GM10248 (cell line): ENCODE measurements at regions of chr12 and their contacts with region 1.

Region 1: DNA sequence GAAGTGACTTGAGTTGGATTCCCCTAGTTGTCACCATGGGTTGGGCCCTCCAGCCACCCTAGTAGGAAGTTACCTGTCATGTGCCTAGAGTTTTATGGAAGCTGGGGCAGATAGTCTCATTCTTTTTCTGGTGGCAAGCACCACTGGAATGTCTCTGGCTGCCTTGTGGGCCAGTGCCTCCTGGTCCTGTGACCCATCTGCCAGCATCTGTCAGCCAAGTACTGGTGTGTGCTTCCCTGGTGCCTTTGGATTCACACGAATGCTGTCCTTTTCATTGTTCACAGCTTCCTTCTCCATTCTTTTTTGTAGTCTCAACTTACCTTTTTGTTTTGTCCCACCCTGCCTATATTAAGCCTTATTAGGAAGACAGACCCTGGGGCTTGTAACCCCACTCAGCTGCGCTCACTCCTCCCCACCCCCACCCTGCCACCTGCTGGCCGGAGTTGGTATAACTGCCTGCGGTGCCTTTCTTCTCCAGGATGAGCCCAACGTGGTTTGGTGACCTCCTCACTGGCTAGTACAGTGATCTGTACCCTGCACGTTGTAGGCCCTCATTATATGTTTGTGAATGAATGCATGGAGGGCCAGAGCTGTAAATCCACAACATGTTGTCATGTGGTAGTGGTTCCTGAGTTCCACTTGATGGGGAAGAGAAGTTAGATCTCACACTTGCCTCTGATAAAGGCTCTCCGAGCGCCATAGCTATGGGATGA is 125.7 kb downstream of the TSPAN9 start:
- DNase-seq: peak; percentile 75
- CTCF ChIP-seq: peak; percentile 81

Region 2: DNA sequence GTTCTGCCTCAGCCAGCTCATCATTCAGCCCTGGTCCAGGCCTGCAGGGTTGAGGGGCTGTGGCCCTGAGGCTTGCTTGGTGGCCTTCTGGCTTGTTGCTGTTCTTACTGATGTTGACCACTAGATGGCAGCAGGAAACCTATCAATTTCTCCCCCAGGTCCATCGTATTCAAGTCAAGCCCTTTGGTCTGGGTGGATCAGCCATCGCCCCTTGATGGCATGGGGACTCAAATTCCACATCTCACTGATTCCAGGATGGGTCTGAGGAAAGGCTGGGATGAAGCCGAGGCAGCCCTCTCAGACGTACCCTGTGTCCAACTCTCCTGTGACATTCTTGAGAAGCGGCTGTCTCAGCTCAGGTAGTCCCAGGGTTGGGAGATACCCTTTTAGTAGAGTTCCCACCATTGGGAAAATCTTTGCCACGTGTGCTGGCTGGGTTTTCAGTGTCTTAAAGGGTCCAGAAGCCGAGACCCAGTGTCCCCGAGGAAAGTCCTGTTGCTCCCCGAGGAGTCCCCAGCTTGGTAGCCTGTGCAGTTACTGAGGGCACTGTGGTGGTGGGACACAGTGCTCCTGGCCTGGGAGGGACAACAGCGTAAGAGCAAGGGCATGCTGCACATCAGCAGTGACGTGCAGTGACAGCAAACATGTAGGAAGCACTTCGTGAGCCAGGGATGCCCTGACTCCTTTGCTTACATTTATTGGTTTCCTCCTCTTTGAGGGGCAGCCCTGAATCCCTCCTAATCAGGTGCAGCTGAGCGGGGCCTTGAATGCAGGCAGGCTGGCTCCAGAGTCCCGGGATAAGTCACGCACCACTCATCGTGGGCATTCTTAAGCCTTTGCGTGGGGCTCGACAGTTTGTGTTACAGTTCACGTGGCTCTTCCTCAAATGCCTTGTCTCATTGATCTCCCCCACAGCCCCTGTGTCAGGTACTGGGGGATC is 67.1 kb before region 1 on chr12:
- CTCF ChIA-PET with region 1: interaction called, 23 read pairs
- POLR2A ChIA-PET with region 1: no interaction called
- DNase-seq: peak; percentile 86
- CTCF ChIP-seq: peak; percentile 84

Region 3: GRCh38 chr12:3186546-3187215 is 16.2 kb before region 1 on chr12:
- CTCF ChIA-PET with region 1: interaction called, 27 read pairs
- POLR2A ChIA-PET with region 1: no interaction called
- DNase-seq: peak; percentile 66
- CTCF ChIP-seq: no peak

Region 4: GRCh38 chr12:3213188-3213587 is 10.3 kb after region 1 on chr12:
- CTCF ChIA-PET with region 1: interaction called, 13 read pairs
- POLR2A ChIA-PET with region 1: no interaction called
- DNase-seq: no peak
- CTCF ChIP-seq: no peak

Region 5: GRCh38 chr12:3218228-3219171 is 15.6 kb after region 1 on chr12:
- CTCF ChIA-PET with region 1: interaction called, 13 read pairs
- POLR2A ChIA-PET with region 1: no interaction called
- DNase-seq: peak; percentile 54
- CTCF ChIP-seq: no peak

Region 6: GRCh38 chr12:3275171-3276041 is 72.5 kb after region 1 on chr12:
- CTCF ChIA-PET with region 1: interaction called, 10 read pairs
- POLR2A ChIA-PET with region 1: no interaction called
- DNase-seq: peak; percentile 87
- CTCF ChIP-seq: peak; percentile 89

Region 7: GRCh38 chr12:3480764-3481163 is 277.9 kb after region 1 on chr12:
- CTCF ChIA-PET with region 1: no interaction called
- POLR2A ChIA-PET with region 1: no interaction called
- DNase-seq: no peak
- CTCF ChIP-seq: no peak